Tibial artery (tissue), 4 donors: ENCODE measurements at regions of chr17 and their contacts with region 1.

Region 1: DNA sequence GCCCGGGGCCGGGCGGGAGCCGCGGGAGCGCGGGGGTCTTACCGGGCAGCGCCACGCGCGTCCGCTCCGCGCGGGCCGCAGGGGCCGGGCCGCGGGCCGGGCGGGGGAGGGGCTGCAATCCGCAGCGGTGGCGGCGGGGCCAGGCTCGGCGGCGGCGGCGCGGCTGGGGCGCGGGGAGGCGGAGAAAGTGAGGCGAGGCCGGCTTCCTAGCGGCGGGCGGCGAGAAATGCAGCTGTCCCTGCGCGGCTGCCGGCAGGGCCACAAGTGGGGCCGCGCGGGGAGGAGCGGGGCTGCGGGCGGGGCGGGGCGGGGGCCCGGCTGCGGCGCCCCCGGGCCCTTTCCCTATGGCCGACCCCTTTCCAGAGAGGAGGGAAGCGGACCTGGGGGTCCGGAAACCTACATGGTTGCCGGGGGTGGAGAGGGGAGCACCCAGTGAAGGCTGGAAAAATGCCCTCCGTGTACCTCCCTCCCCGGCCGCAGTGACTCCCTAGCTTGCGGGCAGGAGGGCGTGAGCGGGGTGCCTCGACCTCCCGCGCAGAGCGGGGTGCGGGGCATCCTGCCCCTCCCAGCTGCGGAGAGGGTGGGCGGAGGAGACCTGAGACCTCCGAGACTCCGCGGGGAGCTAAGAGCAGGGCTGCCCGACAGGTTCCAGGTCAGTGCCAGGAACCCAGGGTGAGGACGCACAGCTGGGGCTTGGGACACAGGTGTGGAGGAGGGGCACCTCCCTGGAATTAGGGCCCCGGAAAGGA is at the start of gene CUEDC1:
- DNase-seq: peak; percentile 68 to 88
- H3K4me3 ChIP-seq: peak within 1 kb of the TSS; percentile 88 to 92
- H3K27ac ChIP-seq: peak within 1 kb of the TSS; percentile 98 to 99
- H3K4me1 ChIP-seq: peaks cover 0 to 47% (median 41%) of the 10 kb centered on the region in 4 donors
- H3K27me3 ChIP-seq: no peaks in the 10 kb centered on the region
- CTCF ChIP-seq: peak; percentile 28 to 57

Region 2: GRCh38 chr17:57523926-57524632 is 431.3 kb before region 1 on chr17:
- intact Hi-C with region 1: no loop called
- DNase-seq: peak in 1 of 2 donors; percentile 70
- H3K4me3 ChIP-seq: no peak overlapping the region
- H3K27ac ChIP-seq: no peak overlapping the region
- H3K4me1 ChIP-seq: peaks cover 0 to 13% (median 4%) of the 10 kb centered on the region in 4 donors
- H3K27me3 ChIP-seq: no peaks in the 10 kb centered on the region
- CTCF ChIP-seq: no peak

Region 3: GRCh38 chr17:57874434-57875308 is 80.7 kb before region 1 on chr17:
- intact Hi-C with region 1: loop called (anchors 5 kb)
- DNase-seq: peak; percentile 74 to 89
- H3K4me3 ChIP-seq: peak overlapping the region; percentile 34 to 43
- H3K27ac ChIP-seq: peak overlapping the region; percentile 79 to 84
- H3K4me1 ChIP-seq: peaks cover 5 to 61% (median 57%) of the 10 kb centered on the region in 4 donors
- H3K27me3 ChIP-seq: no peaks in the 10 kb centered on the region
- CTCF ChIP-seq: no peak

Region 4: DNA sequence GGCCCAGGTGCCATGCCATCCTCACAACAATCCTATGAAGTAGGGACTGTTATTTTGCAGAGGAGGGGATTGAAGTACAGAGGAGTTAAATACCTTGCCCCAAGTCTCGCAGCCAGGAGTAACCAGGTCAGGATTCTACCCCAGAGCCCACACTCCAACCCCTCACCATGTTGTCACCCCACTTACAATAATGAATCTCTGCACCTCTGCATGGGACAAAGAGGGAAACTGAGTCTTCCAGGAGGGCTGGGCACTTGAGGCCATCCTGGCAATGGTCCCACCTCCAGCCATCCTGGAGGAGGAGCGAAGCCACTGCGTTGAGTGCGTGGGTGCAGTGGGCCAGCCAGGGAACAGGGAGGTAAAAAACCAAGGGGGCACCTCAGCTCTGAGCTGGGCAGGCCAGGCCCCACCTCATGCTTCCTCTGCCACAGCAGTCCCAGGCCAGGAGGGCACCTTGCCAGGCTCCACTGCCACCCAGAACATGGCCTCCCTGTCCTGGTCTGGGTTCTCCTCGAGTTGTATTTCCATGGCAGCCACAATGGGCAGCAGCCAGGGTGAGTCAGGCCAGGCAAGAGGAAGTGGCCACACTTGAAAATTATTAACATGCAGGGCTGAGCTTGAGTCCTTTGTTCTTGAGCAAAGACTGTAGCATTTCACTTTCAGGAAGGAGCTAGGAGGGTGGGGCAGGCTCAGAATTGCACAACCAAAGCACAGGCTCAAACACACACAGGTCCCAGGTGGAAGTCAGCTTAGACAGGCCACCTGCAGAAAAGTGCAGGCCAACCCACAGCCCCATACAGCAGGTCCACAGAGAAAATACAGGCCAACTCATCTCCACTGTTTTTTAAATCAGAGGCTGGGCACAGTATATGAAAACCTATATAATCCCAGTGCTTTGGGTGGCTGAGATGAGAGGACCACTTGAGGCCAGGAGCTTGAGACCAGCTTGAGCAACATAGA is 52.3 kb before region 1 on chr17:
- intact Hi-C with region 1: no loop called
- DNase-seq: peak; percentile 92 to 95
- H3K4me3 ChIP-seq: no peak overlapping the region
- H3K27ac ChIP-seq: peak overlapping the region; percentile 69 to 71
- H3K4me1 ChIP-seq: peaks cover 21 to 70% (median 53%) of the 10 kb centered on the region in 4 donors
- H3K27me3 ChIP-seq: no peaks in the 10 kb centered on the region
- CTCF ChIP-seq: no peak

Region 5: DNA sequence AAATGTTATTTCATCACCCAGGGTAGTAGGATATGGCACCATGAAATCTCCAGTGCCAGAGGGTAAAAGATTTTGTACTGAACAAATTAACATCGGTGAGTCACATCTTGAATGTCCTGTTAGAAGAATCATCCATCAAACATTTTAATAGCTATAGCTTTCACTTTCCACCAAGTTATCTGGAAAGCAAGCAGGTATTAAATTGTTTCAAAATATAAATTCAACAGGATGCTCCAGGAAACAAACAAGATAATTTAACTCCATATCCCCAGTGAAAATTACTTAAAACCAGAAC is 30.3 kb after region 1 on chr17:
- intact Hi-C with region 1: loop called (anchors 2 kb)
- DNase-seq: no peak
- H3K4me3 ChIP-seq: peak overlapping the region in 1 of 2 donors; percentile 0
- H3K27ac ChIP-seq: peak overlapping the region in 1 of 2 donors; percentile 96
- H3K4me1 ChIP-seq: peaks cover 0 to 65% (median 48%) of the 10 kb centered on the region in 4 donors
- H3K27me3 ChIP-seq: no peaks in the 10 kb centered on the region
- CTCF ChIP-seq: no peak

Region 6: GRCh38 chr17:58382108-58382871 is 426.9 kb after region 1 on chr17:
- intact Hi-C with region 1: no loop called
- DNase-seq: no peak
- H3K4me3 ChIP-seq: no peak overlapping the region
- H3K27ac ChIP-seq: no peak overlapping the region
- H3K4me1 ChIP-seq: no peaks in the 10 kb centered on the region
- H3K27me3 ChIP-seq: no peaks in the 10 kb centered on the region
- CTCF ChIP-seq: no peak